GM13976 (cell line): ENCODE measurements at regions of chr6 and their contacts with region 1.

Region 1: GRCh38 chr6:157667211-157668008 is 155.6 kb upstream of the SNX9 start:
- DNase-seq: peak; percentile 74
- CTCF ChIP-seq: peak; percentile 72

Region 2: DNA sequence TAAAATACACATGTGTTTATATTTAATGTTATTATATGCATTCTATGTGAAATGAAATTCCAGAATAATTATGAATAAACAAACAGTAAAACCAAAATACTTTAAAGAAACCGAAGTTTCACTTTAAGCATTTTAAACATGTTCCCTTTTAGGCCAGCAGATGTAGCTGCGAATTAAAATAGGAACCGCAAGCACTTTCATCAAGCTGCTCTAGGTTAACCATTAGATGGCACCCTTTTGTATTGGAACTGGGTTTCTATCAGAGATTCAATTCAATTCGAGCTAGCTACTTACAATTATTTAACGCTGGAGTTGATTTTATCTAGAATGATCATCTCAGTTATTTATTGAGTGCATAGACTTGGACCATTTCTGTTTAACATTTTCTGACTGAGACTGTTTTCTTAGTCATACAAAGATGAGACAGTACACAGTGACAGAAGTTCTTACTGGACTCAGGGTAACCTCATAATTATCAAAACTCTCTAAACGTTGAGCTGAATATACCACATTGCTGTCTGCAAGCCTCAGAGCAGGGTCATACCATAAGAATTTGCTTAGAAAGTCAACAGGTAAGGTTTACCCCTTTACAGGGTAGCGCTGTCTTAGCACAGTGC is 352.6 kb before region 1 on chr6:
- in situ Hi-C with region 1: loop called (anchors 10 kb)
- DNase-seq: peak; percentile 74
- CTCF ChIP-seq: peak; percentile 87